Thyroid gland (tissue), 4 donors: ENCODE measurements at regions of chr10 and their contacts with region 1.

Region 1: GRCh38 chr10:86803156-86803555 is 46.7 kb downstream of the BMPR1A start:
- DNase-seq: no peak
- H3K4me3 ChIP-seq: no peak overlapping the region
- H3K27ac ChIP-seq: no peak overlapping the region
- H3K4me1 ChIP-seq: peaks cover 21 to 28% of the 10 kb centered on the region in 2 donors
- H3K27me3 ChIP-seq: no peaks in the 10 kb centered on the region
- CTCF ChIP-seq: no peak
- POLR2A ChIP-seq: no peak

Region 2: GRCh38 chr10:86851329-86852207 is 48.4 kb after region 1 on chr10:
- intact Hi-C with region 1: loop called (anchors 10 kb)
- DNase-seq: no peak
- H3K4me3 ChIP-seq: no peak overlapping the region
- H3K27ac ChIP-seq: no peak overlapping the region
- H3K4me1 ChIP-seq: peaks cover 4 to 9% of the 10 kb centered on the region in 2 donors
- H3K27me3 ChIP-seq: no peaks in the 10 kb centered on the region
- CTCF ChIP-seq: no peak
- POLR2A ChIP-seq: no peak